ENCODE measurements at regions of chr19 and their contacts with region 1.

Region 1: DNA sequence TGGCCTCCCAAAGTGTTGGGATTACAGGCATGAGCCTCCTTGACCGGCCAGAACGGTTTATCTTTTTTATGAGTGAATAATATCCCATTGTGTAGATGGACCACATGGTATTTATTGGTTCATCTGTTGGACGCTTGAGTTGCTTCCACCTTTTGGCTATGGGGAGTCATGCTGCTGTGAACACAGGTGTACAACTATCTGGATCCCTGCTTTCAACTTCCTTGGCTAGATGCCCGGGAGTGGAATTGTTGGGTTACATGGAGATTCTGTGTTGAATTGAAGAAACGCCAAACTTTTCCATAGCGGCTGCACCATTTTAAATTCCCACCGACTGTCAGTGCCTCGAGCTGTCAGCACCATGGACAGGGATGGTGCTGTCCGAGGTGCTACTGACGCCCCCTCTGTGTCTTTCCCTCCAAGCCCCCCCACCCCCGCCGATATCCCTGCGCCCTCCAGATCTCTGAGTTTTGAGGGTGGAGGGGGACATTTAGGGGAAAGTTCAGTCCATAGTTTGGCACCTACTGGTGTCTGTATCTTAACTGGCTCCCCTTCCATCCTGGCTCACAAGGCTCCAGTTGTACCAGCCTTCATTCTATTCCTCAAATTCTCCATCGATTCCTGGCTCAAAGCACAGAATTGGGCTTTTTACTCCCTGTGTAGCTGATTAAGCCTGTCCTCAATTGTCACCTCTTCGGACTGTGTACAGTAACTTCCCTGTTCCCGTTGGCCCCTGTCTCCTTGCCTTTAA is 27.3 kb downstream of the PNPLA6 start:
- DNase-seq: peak; percentile 58
- ATAC-seq: no peak
- H3K4me3 ChIP-seq: no peak overlapping the region
- H3K27ac ChIP-seq: no peak overlapping the region
- H3K4me1 ChIP-seq: no peaks in the 10 kb centered on the region
- H3K27me3 ChIP-seq: no peaks in the 10 kb centered on the region
- CTCF ChIP-seq: no peak

Region 2: GRCh38 chr19:7522072-7522922 is 40.5 kb before region 1 on chr19 and contains the start of gene MCOLN1:
- CTCF ChIA-PET with region 1: no interaction called
- POLR2A ChIA-PET with region 1: no interaction called
- intact Hi-C with region 1: no loop called
- DNase-seq: peak; percentile 99
- ATAC-seq: peak; percentile 78
- H3K4me3 ChIP-seq: peak within 1 kb of the TSS; percentile 78
- H3K27ac ChIP-seq: no peak within 1 kb of the TSS
- H3K4me1 ChIP-seq: peaks cover 13% of the 10 kb centered on the region
- H3K27me3 ChIP-seq: no peaks in the 10 kb centered on the region
- CTCF ChIP-seq: no peak
- total RNA-seq, gene MCOLN1: 10.2 and 22.9 TPM in 2 replicates

Region 3: DNA sequence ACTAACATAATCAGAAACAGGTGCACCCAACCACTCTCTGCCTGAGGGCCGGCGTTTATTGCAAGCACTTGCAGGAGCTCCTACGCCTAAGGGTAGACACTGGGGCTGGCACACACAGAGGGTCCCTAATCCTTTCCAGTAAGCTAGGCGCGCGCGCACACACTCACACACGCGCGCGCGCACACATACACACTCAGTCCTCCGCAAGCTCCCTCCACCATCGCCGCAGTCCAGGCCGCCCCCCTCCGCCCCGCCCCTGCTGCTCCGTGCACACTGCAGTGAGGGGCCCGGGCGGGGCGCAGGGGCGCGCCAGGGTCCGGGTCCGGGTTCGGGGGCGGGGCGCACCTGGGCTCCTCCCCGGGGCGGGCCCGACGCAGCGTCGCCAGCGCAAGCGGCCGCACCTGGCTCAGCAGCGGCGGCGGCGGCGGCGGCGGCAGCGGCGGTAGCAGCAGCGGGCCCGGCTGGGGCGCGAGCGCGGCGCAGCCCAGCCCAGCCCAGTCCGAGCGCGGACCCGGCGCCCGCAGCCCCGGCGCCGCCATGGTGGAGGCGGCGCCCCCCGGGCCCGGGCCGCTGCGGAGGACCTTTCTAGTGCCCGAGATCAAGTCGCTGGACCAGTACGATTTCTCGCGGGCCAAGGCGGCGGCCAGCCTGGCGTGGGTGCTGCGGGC is 32.8 kb after region 1 on chr19 and contains the start of gene CAMSAP3:
- CTCF ChIA-PET with region 1: interaction called, 48 read pairs
- POLR2A ChIA-PET with region 1: no interaction called
- intact Hi-C with region 1: loop called (anchors 2 kb)
- DNase-seq: peak; percentile 73
- ATAC-seq: peak; percentile 89
- H3K4me3 ChIP-seq: peak within 1 kb of the TSS; percentile 78
- H3K27ac ChIP-seq: no peak within 1 kb of the TSS
- H3K4me1 ChIP-seq: peaks cover 16% of the 10 kb centered on the region
- H3K27me3 ChIP-seq: no peaks in the 10 kb centered on the region
- CTCF ChIP-seq: no peak
- total RNA-seq, gene CAMSAP3: 16.6 and 25.4 TPM in 2 replicates

Region 4: DNA sequence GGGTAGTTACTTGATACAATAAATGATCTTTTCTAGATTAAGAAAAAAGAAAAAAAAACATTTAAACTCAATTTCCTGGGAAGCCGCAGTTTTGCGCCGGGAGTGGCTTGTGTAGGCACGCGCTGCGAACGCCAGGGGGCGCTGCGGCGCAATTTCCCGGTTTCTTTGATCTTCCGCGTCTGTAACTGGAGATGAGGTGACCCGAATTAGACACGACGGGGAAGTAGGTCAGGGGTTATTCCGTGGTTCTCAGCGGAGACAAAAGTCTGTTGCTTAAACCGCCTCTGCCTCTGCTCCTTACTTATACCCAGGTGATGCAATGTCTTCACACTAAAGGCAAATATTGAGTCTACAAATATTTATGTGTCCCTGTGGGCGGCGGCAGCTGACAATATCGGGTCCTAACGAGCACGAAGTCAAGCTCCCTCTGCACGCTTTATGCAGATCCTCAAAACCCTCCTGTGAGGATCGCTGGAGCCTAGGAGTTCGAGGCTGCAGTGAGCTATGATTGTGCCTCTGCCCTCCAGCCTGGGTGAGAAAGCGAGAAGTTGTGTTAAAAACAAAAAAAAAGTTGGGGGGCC is 89.3 kb after region 1 on chr19:
- CTCF ChIA-PET with region 1: interaction called, 11 read pairs
- POLR2A ChIA-PET with region 1: no interaction called
- intact Hi-C with region 1: no loop called
- DNase-seq: peak; percentile 95
- ATAC-seq: peak; percentile 78
- H3K4me3 ChIP-seq: peak overlapping the region; percentile 23; the same call in 1 of the 2 replicates
- H3K27ac ChIP-seq: no peak overlapping the region
- H3K4me1 ChIP-seq: peaks cover 3% of the 10 kb centered on the region; the same call in 1 of the 2 replicates
- H3K27me3 ChIP-seq: no peaks in the 10 kb centered on the region
- CTCF ChIP-seq: peak; percentile 97

Region 5: DNA sequence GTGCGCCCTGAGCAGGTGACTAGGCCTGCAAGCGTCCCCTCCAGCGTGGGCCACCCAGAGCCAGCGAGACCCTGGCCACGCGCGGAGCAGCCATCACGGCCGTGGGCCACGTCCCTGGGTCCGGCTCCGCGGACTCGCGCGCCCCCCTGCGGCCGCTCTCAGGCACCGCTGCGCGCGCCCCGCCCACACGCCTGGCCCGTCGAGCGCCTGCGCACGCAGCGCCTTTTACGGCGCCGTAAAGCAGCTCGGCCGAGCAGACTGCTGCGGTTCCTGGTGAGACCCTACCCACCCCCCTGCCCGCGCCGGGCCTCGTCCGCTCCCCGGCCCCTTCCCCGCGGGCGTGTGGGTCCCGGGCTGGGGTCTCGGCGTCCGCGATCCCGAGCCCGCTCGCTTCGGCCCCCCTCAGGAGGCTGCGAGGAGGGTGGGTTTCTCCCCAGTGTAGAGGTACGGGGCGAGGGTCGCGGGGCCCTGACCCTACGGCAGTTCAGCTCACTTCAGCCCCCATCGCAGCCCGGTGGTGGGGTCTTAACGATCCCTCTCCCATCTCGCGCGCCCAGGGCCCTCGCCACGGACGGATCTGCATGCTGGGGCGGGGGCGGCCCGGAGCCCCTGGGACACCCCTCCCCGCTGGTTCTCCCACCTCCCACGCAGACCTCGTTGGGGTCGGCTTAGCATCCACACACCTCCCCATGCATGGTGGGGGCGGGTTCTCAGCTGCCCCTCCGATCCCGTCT is 118.0 kb after region 1 on chr19 and contains the start of gene TRAPPC5:
- CTCF ChIA-PET with region 1: interaction called, 48 read pairs
- POLR2A ChIA-PET with region 1: no interaction called
- intact Hi-C with region 1: loop called (anchors 1 kb)
- DNase-seq: peak; percentile 93
- ATAC-seq: peak; percentile 81
- H3K4me3 ChIP-seq: peak within 1 kb of the TSS; percentile 97
- H3K27ac ChIP-seq: peak within 1 kb of the TSS; percentile 23; the same call in 1 of the 2 replicates
- H3K4me1 ChIP-seq: peaks cover 25% of the 10 kb centered on the region; the same call in 1 of the 2 replicates
- H3K27me3 ChIP-seq: no peaks in the 10 kb centered on the region
- CTCF ChIP-seq: peak; percentile 95
- total RNA-seq, gene TRAPPC5: 317 and 376 TPM in 2 replicates

Region 6: GRCh38 chr19:7734220-7735203 is 171.7 kb after region 1 on chr19:
- CTCF ChIA-PET with region 1: no interaction called
- POLR2A ChIA-PET with region 1: no interaction called
- intact Hi-C with region 1: no loop called
- DNase-seq: no peak
- ATAC-seq: no peak
- H3K4me3 ChIP-seq: no peak overlapping the region
- H3K27ac ChIP-seq: no peak overlapping the region
- H3K4me1 ChIP-seq: no peaks in the 10 kb centered on the region
- H3K27me3 ChIP-seq: peaks cover 46% of the 10 kb centered on the region
- CTCF ChIP-seq: no peak